ENCODE measurements at regions of chr21 and their contacts with region 1.

Region 1: DNA sequence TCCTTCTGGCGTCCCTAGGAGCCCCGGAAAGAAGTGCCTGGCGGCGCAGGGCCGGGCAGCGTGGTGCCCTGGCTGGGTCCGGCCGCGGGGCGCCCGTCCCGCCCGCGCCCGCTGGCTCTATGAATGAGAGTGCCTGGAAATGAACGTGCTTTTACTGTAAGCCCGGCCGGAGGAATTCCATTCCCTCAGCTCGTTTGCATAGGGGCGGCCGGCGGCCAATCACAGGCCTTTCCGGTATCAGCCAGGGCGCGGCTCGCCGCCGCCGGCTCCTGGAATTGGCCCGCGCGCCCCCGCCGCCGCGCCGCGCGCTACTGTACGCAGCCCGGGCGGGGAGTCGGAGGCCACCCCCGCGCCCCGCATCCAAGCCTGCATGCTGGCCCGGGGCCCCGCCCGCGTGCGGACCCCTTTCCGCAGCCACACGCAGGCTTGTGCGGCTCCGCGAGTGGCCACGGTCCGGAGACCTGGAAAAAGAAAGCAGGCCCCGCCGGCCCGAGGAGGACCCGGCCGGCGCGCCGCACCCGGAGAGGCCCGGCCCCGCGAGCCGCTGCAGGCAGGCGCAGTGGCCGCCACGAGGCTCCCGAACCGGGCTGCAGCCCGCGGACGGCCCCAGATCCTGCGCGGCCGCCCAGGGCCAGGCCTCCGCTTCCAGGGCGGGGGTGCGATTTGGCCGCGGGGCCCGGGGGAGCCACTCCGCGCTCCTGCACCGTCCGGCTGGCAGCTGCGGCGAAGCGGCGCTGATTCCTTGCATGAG is 160.4 kb downstream of the RUNX1 start:
- DNase-seq: peak; percentile 86 to 96
- H3K4me3 ChIP-seq: peak overlapping the region; percentile 77 to 85
- H3K27ac ChIP-seq: peak overlapping the region; percentile 86 to 94
- H3K4me1 ChIP-seq: peaks cover 4 to 24% of the 10 kb centered on the region in 2 donors
- H3K27me3 ChIP-seq: peaks cover 4% of the 10 kb centered on the region
- CTCF ChIP-seq: peak in 1 of 3 experiments; percentile 3

Region 2: DNA sequence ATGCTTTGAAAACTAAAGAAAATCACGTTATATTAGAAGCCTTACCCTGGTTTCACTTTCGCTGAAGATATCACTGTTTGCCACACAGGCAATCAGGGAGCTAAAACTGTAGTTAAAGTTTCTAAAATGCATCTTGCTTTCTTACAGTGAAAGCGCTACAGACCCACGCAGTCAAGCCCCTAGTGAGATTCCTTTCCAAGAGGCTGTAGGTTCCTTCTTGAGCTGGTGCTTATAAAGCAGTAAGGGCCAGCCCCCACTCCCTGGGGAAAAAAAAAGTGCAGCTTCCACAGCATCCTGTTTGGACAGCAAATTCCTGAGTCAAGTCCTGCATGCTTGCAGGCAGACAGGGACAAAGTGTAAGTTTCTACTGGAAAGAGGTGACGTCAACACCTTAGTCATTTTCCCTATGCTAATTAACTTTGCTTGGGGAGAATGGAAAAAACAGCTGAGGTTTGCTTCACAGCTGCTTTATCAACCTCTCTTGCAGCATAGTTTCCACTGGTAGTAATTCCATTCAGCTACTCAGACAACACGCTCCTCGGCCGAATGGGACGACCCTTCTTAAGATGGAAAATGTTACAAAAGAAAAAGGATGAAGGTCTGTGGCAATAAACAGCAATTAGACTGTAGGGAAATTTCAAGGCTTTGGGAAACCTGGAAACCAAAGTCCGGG is 362.0 kb before region 1 on chr21:
- intact Hi-C with region 1: loop called (anchors 5 kb)
- DNase-seq: peak; percentile 34 to 96
- H3K4me3 ChIP-seq: peak overlapping the region; percentile 54 to 67
- H3K27ac ChIP-seq: peak overlapping the region; percentile 87 to 96
- H3K4me1 ChIP-seq: peaks cover 4 to 36% of the 10 kb centered on the region in 2 donors
- H3K27me3 ChIP-seq: no peaks in the 10 kb centered on the region
- CTCF ChIP-seq: no peak

Region 3: DNA sequence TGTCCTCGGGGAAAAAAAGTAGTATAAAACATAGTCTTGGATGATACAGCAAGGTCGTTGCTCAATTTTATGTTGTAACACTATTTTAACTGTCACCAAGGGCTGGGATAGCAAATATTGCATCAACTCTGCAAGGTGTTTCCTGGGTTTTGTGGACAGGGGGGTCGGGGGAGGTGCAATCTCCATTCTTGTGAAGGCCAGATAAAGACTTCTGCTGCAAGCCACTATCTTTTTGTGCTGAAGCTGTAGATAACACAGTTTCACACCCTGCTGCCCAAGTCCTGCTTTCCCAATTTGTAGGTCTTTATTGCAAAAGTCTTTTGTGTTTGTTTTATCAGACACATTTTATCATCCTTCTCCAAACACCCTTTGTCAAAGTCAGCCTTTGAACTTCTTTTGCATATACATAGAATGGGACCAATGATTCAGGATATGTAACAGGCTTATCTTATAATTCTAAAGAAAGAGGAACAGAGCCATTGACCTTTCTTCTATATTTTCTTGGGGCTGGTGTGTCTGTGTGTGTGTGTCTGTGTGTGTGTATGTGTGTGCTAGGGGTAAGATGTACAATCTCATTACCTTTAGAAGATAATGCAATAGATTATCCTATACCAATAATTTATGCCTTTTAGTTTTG is 19.8 kb after region 1 on chr21:
- intact Hi-C with region 1: no loop called
- DNase-seq: no peak
- H3K4me3 ChIP-seq: no peak overlapping the region
- H3K27ac ChIP-seq: no peak overlapping the region
- H3K4me1 ChIP-seq: no peaks in the 10 kb centered on the region
- H3K27me3 ChIP-seq: no peaks in the 10 kb centered on the region
- CTCF ChIP-seq: no peak

Region 4: DNA sequence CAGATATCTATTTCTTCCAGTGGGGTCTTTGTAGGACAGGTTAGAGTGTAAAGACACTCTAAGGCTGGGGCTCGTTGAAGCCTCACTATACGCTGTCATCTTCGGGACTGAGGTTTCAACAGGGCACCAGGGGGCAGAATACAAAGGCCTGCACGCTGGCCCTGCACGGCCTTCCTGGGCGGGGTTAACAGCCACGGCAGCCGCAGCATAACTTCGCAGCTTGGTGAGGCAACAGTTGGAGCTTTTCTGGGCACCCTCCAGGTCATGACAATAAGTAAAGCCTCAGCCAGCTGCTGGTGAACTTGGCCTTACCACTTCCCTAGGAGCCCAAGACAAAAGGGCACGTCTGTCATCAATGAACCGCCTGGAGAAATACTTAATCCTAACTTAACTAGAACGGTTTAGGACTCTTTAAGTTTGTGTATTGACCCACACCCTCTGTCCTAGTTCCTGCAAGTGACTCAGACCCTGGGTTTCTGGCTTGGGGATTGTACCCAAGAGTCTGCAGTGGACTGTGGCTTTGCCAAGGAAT is 162.6 kb after region 1 on chr21:
- intact Hi-C with region 1: loop called (anchors 5 kb)
- DNase-seq: peak; percentile 55 to 88
- H3K4me3 ChIP-seq: no peak overlapping the region
- H3K27ac ChIP-seq: peak overlapping the region; percentile 81 to 84
- H3K4me1 ChIP-seq: peaks cover 15 to 49% of the 10 kb centered on the region in 2 donors
- H3K27me3 ChIP-seq: no peaks in the 10 kb centered on the region
- CTCF ChIP-seq: peak; percentile 5 to 39 (median 37)

Region 5: DNA sequence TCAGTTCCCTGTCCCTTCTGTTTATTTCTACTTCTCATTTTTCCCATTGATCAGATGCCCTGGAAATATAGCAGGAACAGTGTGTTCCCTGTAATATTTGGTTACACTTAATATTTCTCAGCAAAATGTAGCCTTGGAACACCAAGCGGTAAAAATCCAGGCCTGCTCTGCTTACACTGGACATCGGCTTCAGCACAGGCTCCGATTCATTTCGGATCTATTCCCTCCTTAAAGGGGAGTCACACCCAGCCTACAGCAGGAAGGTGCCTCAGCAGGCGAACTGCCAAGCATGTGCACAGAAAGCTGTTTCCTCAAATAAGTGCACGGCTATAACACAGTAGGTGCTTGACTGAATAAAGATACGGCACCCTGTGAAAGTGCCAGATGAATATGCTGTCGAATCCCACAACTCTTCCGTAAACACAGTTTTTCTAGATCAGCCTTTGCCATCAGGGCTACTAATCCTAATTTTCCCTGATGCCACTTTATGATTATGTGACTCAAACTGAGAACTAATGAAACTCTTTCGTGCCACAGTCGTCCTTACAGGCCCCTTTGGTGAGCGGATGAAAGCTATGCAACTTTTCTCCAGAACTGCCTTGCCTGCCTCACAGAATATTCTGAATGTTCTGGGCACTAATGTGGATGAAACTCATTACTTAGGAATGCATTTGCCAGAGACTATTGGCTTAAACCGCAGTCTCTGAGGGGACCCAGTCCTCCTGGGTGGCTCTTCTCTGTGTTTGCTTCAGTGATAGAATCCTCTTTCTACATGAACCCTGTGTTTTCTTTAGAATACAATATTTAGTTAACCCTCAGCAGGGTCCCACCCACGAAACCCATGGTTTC is 435.9 kb after region 1 on chr21:
- intact Hi-C with region 1: loop called (anchors 2 kb)
- DNase-seq: no peak
- H3K4me3 ChIP-seq: peak overlapping the region in 1 of 2 donors; percentile 37
- H3K27ac ChIP-seq: peak overlapping the region; percentile 77 to 80
- H3K4me1 ChIP-seq: peaks cover 18 to 21% of the 10 kb centered on the region in 2 donors
- H3K27me3 ChIP-seq: no peaks in the 10 kb centered on the region
- CTCF ChIP-seq: no peak

Region 6: GRCh38 chr21:35840197-35840799 is 951.6 kb after region 1 on chr21:
- intact Hi-C with region 1: loop called (anchors 2 kb)
- DNase-seq: peak in 1 of 2 donors; percentile 79
- H3K4me3 ChIP-seq: no peak overlapping the region
- H3K27ac ChIP-seq: no peak overlapping the region
- H3K4me1 ChIP-seq: peaks cover 0 to 8% of the 10 kb centered on the region in 2 donors
- H3K27me3 ChIP-seq: no peaks in the 10 kb centered on the region
- CTCF ChIP-seq: peak; percentile 65 to 84 (median 66)

Region 7: DNA sequence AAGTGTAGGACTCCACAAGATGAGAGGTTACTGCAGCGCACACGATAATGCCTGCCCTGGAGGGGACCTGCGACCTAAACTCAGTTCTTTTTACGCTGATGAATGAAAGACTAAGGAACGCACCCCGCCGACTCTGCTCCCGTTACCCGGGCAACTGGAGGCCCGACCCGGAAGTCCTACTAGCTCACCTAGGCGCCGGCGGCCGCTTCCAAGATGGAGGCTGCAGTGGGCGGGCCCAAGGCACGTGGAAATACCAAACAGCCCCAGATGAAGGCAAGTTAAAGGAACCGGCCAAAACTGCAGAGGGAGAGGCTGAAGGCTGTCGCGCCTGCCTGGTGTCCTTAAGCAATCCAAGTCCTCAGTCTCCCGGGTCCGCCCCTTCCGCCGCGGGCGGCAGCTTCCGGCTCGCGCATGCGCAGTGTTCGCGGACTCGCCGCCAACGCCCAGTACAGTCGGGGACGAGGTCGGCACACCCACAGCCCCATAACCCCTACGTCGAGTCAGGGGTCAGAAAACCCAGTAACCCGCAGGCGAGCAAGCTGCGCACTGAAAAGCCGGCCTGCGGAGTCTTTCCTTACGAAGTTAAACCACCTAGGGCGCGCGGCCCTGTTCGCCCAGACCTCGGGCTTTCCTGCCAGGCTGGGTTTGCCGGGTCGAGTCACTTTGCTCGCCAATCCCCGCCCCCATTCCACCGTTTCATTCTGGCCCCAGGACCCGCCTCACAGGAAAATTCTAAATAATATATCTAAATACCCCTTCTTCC is 1171.6 kb after region 1 on chr21 and contains the start of gene SETD4:
- intact Hi-C with region 1: loop called (anchors 10 kb)
- DNase-seq: peak; percentile 63 to 95
- H3K4me3 ChIP-seq: peak within 1 kb of the TSS; percentile 80 to 81
- H3K27ac ChIP-seq: peak within 1 kb of the TSS; percentile 91 to 93
- H3K4me1 ChIP-seq: peaks cover 0 to 11% of the 10 kb centered on the region in 2 donors
- H3K27me3 ChIP-seq: no peaks in the 10 kb centered on the region
- CTCF ChIP-seq: no peak
- total RNA-seq, gene SETD4: 35.9 TPM